ENCODE measurements at regions of chr1 and their contacts with region 1.

Region 1: DNA sequence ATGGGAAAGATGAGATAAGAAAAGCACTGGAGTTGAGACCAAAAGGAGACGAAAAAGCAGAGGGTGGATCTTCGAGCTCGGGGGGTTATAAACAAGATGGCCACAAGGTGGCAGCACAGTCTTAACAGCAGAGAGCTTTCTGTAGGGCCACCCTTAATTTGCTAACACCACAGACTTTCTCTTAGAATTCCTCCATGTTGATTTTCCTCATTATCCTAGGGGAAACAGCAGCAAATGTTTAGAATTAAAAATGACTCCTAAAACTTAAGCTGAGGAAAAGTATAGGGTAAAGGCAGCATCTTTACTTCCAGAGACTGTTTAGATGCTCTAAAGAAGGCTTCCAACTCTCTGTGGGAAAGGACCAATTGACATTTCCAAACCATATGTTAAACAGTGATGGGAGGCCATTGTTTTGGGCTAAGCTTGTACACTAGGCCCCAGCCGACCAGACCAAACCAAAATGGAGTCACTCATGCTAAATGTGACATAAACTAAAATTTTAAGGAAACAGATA is 2.5 kb upstream of the APOBEC4 start:
- DNase-seq: peak in 2 of 3 donors; percentile 72 to 93
- ATAC-seq: peak; percentile 63
- H3K4me3 ChIP-seq: no peak overlapping the region
- H3K4me1 ChIP-seq: peaks cover 2% of the 10 kb centered on the region
- CTCF ChIP-seq: peak; percentile 51

Region 2: GRCh38 chr1:183891158-183891856 is 235.7 kb after region 1 on chr1:
- intact Hi-C with region 1: no loop called
- DNase-seq: no peak
- ATAC-seq: no peak
- H3K4me3 ChIP-seq: no peak overlapping the region
- H3K4me1 ChIP-seq: no peaks in the 10 kb centered on the region
- CTCF ChIP-seq: no peak

Region 3: DNA sequence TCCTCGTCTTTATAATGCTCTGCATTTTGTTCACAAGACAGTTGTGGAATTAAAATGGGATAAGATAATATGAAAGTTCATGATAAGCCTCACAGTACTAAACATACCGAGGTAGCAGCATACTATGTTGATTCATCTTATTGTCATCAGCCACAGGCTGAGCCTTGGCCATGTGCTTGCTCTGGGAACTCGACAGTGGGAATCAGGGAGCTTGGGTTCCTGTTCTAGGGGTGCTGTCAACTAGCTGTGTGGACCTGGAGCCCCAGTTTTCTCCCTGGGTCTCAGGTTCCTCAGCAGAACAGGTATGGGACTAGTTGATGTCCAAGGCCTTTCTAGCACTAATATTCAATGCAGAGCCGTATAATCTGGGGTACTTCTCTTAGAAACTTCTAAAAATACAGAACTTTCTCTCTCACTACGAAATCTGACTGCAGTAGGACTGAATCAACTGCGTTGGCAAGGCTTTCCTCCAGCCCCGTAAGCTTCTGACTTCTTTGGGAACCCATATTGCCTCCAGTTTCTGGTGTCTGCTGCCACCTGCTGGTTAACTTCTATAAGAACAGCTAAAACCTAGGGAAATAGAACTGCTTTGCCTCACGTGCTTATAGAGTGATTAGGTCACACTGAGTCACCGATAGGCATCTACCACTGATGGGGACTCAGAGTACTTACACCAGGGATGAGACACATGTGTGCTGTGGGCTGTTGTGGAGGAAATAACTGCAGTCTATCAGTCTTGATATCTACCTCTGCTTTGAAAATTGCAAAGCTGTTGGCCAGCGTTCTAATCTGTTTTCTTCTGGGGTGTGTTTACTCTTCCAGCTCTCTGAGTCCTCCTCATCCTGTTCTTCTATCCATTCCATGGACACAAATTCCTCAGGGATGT is 260.2 kb after region 1 on chr1:
- intact Hi-C with region 1: loop called (anchors 5 kb)
- DNase-seq: peak in 1 of 3 donors; percentile 70
- ATAC-seq: peak; percentile 92
- H3K4me3 ChIP-seq: no peak overlapping the region
- H3K4me1 ChIP-seq: peaks cover 5% of the 10 kb centered on the region
- CTCF ChIP-seq: peak; percentile 53

Measured in mucosa of descending colon (tissue), 3 donors.